CD4-positive, alpha-beta memory T cell (primary cell): ENCODE measurements at regions of chr4 and their contacts with region 1.

Region 1: DNA sequence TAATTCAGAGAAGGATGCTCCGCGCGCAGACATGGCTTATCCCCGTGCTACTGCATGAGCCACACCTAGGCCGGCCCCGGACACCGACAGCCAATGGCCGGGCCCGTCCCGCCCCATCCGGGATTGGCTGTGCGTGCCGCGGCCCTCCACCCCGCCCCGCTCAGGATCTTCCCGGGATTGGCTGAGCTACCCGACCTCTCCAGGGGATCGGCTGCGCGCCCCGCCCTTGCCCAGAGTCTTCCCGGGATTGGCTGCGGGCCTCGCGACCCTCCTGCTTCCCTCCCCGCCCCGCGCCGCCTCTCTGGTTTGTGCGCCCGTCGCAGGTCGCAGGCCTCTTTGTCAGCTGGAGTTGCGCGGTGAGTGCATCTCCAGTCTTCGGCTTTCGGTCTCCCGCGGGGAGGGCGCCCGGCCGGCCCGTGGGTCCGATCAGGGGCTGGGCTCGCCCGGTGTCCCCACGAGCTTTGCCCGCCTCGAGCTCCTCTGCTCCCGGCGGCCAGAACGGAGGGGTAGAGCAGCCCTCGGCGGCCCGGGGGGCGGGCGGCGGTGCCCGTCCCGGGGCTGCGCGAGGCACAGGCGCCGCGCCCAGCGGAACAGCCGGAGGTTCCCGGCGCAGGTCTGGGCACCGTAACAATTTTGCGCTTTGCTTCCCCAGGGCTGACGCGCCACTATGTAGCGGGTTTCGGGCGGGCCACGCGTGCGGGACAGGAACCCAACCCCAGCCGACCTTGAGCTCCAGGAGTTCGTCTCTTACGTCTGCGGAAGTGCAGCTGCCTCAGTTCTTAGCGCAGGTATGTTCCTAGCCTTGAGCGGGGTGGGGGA is 38.8 kb downstream of the ERVMER34-1 start:
- DNase-seq: peak; percentile 96 to 97 (median 97)
- H3K4me3 ChIP-seq: peak overlapping the region; percentile 12 to 85
- H3K4me3 Mint-ChIP-seq: peak overlapping the region; percentile 91 to 97 (median 94)
- H3K27ac ChIP-seq: peak overlapping the region; percentile 85
- H3K27ac Mint-ChIP-seq: peak overlapping the region; percentile 96 to 99 (median 98)
- H3K4me1 ChIP-seq: peaks cover 41% of the 10 kb centered on the region
- H3K4me1 Mint-ChIP-seq: peaks cover 32 to 52% (median 45%) of the 10 kb centered on the region in 4 donors
- H3K27me3 ChIP-seq: no peaks in the 10 kb centered on the region
- H3K27me3 Mint-ChIP-seq: no peaks in the 10 kb centered on the region

Region 2: DNA sequence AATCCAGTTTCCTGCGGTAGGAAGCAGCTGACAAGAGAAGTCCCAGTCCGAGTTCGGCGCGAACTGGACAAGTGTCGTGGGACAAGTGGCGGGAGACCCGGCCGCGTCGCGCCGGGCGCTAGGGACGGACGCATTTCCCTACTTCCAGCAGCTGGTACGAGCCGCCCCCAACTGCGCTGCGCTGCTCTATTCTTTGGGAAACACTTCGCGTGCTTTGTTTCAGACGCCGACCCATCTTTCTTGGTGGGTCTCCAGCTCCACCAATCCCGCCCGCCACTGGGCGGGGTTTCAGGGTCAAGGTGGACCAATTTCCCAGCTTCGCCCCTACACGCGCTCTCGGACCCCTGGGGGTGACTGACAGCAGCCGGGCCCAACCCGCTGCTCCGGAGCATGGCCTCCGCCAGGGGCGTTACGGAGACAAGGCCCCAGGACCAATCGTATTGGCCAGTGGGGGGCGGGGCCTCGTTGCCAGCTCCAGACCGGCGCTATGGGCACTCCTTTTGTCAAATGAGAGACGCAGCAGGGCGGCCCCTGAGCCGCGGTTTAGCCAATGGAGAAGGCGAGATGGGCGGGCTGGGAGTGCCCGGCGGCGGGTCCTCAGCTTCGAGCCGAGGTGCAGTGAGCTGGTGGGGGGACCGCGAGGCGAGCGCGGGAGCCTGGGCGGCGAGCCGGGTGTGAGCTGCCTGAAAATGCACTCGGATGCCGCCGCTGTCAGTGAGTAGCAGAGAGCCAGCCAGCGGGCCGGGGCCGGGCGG is 869.6 kb before region 1 on chr4 and contains the start of gene DCUN1D4:
- CTCF ChIA-PET with region 1: no interaction called
- POLR2A ChIA-PET with region 1: interaction called, 21 read pairs
- intact Hi-C with region 1: no loop called
- DNase-seq: peak; percentile 97
- H3K4me3 ChIP-seq: peak within 1 kb of the TSS; percentile 62 to 93
- H3K4me3 Mint-ChIP-seq: peak within 1 kb of the TSS; percentile 95 to 99 (median 98)
- H3K27ac ChIP-seq: peak within 1 kb of the TSS; percentile 66
- H3K27ac Mint-ChIP-seq: peak within 1 kb of the TSS; percentile 94 to 97 (median 95)
- H3K4me1 ChIP-seq: peaks cover 12% of the 10 kb centered on the region
- H3K4me1 Mint-ChIP-seq: peaks cover 11 to 25% (median 19%) of the 10 kb centered on the region in 4 donors
- H3K27me3 ChIP-seq: no peaks in the 10 kb centered on the region
- H3K27me3 Mint-ChIP-seq: no peaks in the 10 kb centered on the region
- total RNA-seq, gene DCUN1D4: 54.0 to 58.9 TPM

Region 3: DNA sequence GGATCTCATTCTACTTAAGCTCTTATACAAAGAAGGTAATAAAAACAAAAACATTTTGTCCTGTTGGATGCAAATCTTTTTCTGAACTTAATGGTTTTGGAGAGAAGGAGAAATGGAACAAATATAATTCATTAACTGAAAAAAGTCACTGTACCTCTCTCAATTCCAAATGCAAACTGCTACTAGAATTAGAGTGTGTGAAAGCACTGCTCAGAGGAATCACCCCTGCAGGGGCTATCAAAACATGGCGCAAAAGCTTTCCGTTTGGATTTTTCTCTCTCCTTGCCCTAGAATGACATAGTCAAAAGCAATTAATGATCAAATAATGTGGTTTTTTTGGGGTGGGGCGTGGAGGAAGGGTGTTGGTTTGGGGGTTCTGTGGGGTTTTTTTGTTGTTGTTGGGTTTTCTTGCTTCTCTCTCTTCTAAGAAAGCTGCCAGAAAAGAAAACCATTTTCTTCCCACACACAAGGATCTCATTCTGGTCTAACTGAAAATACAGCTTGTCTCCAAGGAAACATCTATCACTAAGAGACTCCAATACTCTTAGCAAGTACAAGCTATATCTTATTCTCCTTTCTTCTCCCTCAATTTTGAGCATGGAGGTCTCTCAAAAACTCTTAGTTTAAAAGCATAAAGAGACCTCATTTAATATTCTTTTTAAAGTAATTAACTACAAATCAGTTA is 94.9 kb before region 1 on chr4:
- CTCF ChIA-PET with region 1: no interaction called
- POLR2A ChIA-PET with region 1: interaction called, 12 read pairs
- intact Hi-C with region 1: no loop called
- DNase-seq: peak in 4 of 5 donors; percentile 18 to 54 (median 32)
- H3K4me3 ChIP-seq: no peak overlapping the region
- H3K4me3 Mint-ChIP-seq: peak overlapping the region in 7 of 8 donors; percentile 43 to 76 (median 64)
- H3K27ac ChIP-seq: no peak overlapping the region
- H3K27ac Mint-ChIP-seq: peak overlapping the region; percentile 23 to 89 (median 68)
- H3K4me1 ChIP-seq: peaks cover 50% of the 10 kb centered on the region
- H3K4me1 Mint-ChIP-seq: peaks cover 38 to 54% (median 46%) of the 10 kb centered on the region in 4 donors
- H3K27me3 ChIP-seq: no peaks in the 10 kb centered on the region
- H3K27me3 Mint-ChIP-seq: no peaks in the 10 kb centered on the region

Region 4: GRCh38 chr4:52659001-52659721 is 53.2 kb before region 1 on chr4 and contains the start of gene USP46:
- CTCF ChIA-PET with region 1: interaction called, 3 read pairs
- POLR2A ChIA-PET with region 1: interaction called, 68 read pairs
- intact Hi-C with region 1: loop called (anchors 1 kb)
- DNase-seq: peak; percentile 38 to 55 (median 50)
- H3K4me3 ChIP-seq: peak within 1 kb of the TSS; percentile 57 to 59
- H3K4me3 Mint-ChIP-seq: peak within 1 kb of the TSS; percentile 86 to 94 (median 92)
- H3K27ac ChIP-seq: peak within 1 kb of the TSS; percentile 54
- H3K27ac Mint-ChIP-seq: peak within 1 kb of the TSS; percentile 77 to 94 (median 92)
- H3K4me1 ChIP-seq: peaks cover 24% of the 10 kb centered on the region
- H3K4me1 Mint-ChIP-seq: peaks cover 32 to 53% (median 43%) of the 10 kb centered on the region in 4 donors
- H3K27me3 ChIP-seq: no peaks in the 10 kb centered on the region
- H3K27me3 Mint-ChIP-seq: no peaks in the 10 kb centered on the region
- total RNA-seq, gene USP46: 25.7 to 26.9 TPM

Region 5: DNA sequence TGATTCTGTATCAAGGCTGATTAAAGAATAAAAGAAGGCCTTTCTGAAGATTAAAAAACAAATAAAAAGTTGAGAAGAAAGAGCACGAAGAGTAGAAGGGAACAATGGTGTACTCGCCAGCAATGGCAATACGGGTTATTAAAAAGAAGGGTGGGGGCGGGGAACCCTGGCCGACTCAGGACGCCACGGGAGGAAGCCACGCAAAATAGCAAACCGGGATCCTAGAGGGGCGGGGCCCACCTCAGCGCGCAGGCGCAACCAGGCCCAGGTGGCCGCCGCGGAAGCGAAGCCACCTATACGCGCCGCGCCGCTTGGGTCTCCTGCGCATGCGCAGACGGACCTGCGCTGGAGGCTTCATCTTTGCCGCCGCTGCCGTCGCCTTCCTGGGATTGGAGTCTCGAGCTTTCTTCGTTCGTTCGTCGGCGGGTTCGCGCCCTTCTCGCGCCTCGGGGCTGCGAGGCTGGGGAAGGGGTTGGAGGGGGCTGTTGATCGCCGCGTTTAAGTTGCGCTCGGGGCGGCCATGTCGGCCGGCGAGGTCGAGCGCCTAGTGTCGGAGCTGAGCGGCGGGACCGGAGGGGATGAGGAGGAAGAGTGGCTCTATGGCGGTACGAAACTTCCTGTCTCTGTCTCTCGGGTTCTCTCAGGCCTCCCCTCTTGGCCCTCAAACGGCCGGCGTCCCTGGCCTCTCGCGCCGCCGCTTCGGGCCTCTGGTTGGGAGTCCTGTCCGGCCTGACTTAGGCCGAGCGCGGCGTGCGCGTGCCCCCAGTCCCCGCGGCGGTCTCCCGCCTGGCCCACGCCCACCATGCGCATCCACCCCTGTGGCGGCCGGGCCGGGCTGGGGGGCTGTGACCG is 665.2 kb after region 1 on chr4 and contains the start of gene FIP1L1:
- CTCF ChIA-PET with region 1: no interaction called
- POLR2A ChIA-PET with region 1: interaction called, 6 read pairs
- intact Hi-C with region 1: loop called (anchors 5 kb)
- DNase-seq: peak; percentile 93 to 97 (median 95)
- H3K4me3 ChIP-seq: peak within 1 kb of the TSS; percentile 71 to 89
- H3K4me3 Mint-ChIP-seq: peak within 1 kb of the TSS; percentile 98 to 100 (median 99)
- H3K27ac ChIP-seq: peak within 1 kb of the TSS; percentile 92
- H3K27ac Mint-ChIP-seq: peak within 1 kb of the TSS; percentile 97 to 100 (median 99)
- H3K4me1 ChIP-seq: peaks cover 37% of the 10 kb centered on the region
- H3K4me1 Mint-ChIP-seq: peaks cover 19 to 53% (median 34%) of the 10 kb centered on the region in 4 donors
- H3K27me3 ChIP-seq: no peaks in the 10 kb centered on the region
- H3K27me3 Mint-ChIP-seq: no peaks in the 10 kb centered on the region
- total RNA-seq, gene FIP1L1: 73.0 to 90.7 TPM